ENCODE measurements at regions of chr22 and their contacts with region 1.

Region 1: GRCh38 chr22:17375914-17376614 is 6.8 kb downstream of the CECR2 start:
- DNase-seq: peak in 1 of 2 donors; percentile 60
- ATAC-seq: peak; percentile 78 to 89 (median 83)
- H3K4me3 ChIP-seq: peak overlapping the region; percentile 8
- H3K27ac ChIP-seq: peak overlapping the region; percentile 99
- H3K4me1 ChIP-seq: peaks cover 74% of the 10 kb centered on the region
- H3K27me3 ChIP-seq: no peaks in the 10 kb centered on the region
- CTCF ChIP-seq: no peak

Region 2: GRCh38 chr22:17486313-17486712 is 110.2 kb after region 1 on chr22:
- intact Hi-C with region 1: loop called in 1 of 2 experiments (anchors 5 kb)
- DNase-seq: peak; percentile 34 to 64
- ATAC-seq: peak; percentile 31 to 46 (median 42)
- H3K4me3 ChIP-seq: no peak overlapping the region
- H3K27ac ChIP-seq: no peak overlapping the region
- H3K4me1 ChIP-seq: peaks cover 24% of the 10 kb centered on the region
- H3K27me3 ChIP-seq: no peaks in the 10 kb centered on the region
- CTCF ChIP-seq: no peak

Region 3: GRCh38 chr22:17606496-17606895 is 230.4 kb after region 1 on chr22:
- intact Hi-C with region 1: no loop called
- DNase-seq: no peak
- ATAC-seq: peak in 3 of 4 donors; percentile 36 to 76 (median 67)
- H3K4me3 ChIP-seq: no peak overlapping the region
- H3K27ac ChIP-seq: no peak overlapping the region
- H3K4me1 ChIP-seq: peaks cover 10% of the 10 kb centered on the region
- H3K27me3 ChIP-seq: no peaks in the 10 kb centered on the region
- CTCF ChIP-seq: no peak